GM12878 (cell line): ENCODE measurements at regions of chr9 and their contacts with region 1.

Region 1: GRCh38 chr9:37800631-37801286 is at the start of gene DCAF10:
- DNase-seq: peak; percentile 40
- ATAC-seq: peak; percentile 89
- H3K4me3 ChIP-seq: peak within 1 kb of the TSS; percentile 80
- H3K27ac ChIP-seq: peak within 1 kb of the TSS; percentile 83
- H3K4me1 ChIP-seq: peaks cover 10% of the 10 kb centered on the region; the same call in 1 of the 2 replicates
- H3K27me3 ChIP-seq: no peaks in the 10 kb centered on the region
- CTCF ChIP-seq: no peak
- EP300 ChIP-seq: 0 out of 4 replicates have a peak, but pooled peaks have one; percentile 17 to 37
- POLR2A ChIP-seq: peak; percentile 95
- RAD21 ChIP-seq: no peak
- polyA plus RNA-seq, gene DCAF10: 3.9 TPM

Region 2: DNA sequence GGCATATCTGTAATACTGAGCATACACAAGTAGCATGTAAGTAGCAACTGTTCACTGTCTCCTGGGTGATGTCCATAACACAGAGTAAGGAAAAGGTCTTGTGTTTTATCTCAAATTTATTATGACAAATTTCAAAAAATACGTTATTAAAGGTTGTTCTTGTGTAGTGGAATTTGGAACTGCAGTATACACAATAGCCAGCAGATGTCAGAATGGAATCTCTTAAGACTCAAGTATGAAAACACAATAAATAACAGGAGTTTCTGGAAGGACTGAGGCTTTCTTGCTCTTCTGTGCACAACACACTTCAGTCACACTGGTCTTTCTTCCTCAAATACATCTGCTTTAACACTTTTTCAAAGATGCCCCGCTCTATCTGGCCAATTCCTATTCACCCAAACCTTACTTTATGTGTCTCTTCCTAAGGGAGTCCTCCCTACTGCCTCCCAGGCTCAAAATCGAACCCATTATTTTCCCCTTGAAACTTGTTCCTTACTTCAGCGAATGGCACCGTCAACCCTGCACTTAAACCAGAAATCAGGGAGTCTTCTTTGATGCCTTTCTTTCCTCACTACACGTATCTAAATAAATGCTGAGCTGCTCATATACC is 218.1 kb before region 1 on chr9:
- CTCF ChIA-PET with region 1: no interaction called
- POLR2A ChIA-PET with region 1: no interaction called
- RAD21 ChIA-PET with region 1: no interaction called
- SMC1A ChIA-PET with region 1: no interaction called
- in situ Hi-C with region 1: no loop called
- intact Hi-C with region 1: loop called (anchors 5 kb)
- DNase-seq: no peak
- ATAC-seq: peak; percentile 77
- H3K4me3 ChIP-seq: no peak overlapping the region
- H3K27ac ChIP-seq: no peak overlapping the region
- H3K4me1 ChIP-seq: no peaks in the 10 kb centered on the region
- H3K27me3 ChIP-seq: no peaks in the 10 kb centered on the region
- CTCF ChIP-seq: peak; percentile 58 to 69 (median 69); a peak in 5 of 6 replicates
- EP300 ChIP-seq: no peak
- POLR2A ChIP-seq: no peak
- RAD21 ChIP-seq: peak; percentile 68